ENCODE measurements at regions of chr6 and their contacts with region 1.

Region 1: DNA sequence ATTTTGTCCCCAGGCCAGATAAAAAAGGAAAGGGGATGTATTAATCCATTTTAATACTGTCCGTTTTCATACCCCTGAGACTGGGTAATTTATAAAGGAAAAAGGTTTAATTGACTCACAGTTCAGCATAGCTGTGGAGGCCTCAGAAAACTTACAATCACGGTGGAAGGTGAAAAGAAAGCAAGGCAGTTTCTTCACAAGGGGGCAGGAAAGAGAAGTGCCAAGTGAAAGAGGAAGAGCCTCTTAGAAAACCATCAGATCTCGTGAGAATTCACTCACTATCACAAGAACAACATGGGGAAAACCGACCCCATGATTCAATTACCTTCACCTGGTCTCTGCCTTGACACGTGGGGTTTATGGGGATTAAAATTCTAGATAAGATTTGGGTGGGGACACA is 152.5 kb downstream of the IBTK start:
- DNase-seq: no peak
- H3K4me3 ChIP-seq: no peak overlapping the region
- H3K27ac ChIP-seq: no peak overlapping the region
- H3K4me1 ChIP-seq: no peaks in the 10 kb centered on the region
- H3K27me3 ChIP-seq: no peaks in the 10 kb centered on the region
- CTCF ChIP-seq: no peak

Region 2: DNA sequence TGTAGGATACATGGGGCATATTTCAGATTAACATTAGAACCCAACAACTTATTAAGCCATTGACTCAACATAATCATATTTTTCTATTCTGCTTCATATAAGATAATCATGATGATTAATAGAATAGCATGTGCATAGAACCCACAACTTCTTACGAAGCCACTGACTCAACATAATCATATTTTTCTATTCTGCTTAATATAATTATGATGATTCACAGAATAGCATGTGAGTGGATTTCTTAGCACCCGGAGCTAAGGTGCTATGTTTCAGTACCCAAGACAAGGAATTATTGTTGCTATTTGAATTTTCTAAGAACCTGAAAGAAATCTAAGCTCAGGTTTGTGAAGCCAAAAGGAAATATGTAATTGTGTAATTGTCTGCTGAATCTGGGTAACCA is 439.4 kb before region 1 on chr6:
- CTCF ChIA-PET with region 1: interaction called, 10 read pairs
- dilution Hi-C with region 1: no loop called
- in situ Hi-C with region 1: no loop called
- intact Hi-C with region 1: no loop called
- DNase-seq: peak; percentile 9
- H3K4me3 ChIP-seq: no peak overlapping the region
- H3K27ac ChIP-seq: no peak overlapping the region
- H3K4me1 ChIP-seq: no peaks in the 10 kb centered on the region
- H3K27me3 ChIP-seq: no peaks in the 10 kb centered on the region
- CTCF ChIP-seq: no peak